ENCODE measurements at regions of chr6 and their contacts with region 1.

Region 1: GRCh38 chr6:37155394-37156312 is 14.3 kb upstream of the PIM1 start:
- DNase-seq: peak; percentile 66
- ATAC-seq: peak; percentile 85
- H3K4me3 Mint-ChIP-seq: peak overlapping the region; percentile 59
- H3K27ac Mint-ChIP-seq: peak overlapping the region; percentile 97
- H3K4me1 Mint-ChIP-seq: peaks cover 65% of the 10 kb centered on the region
- H3K27me3 Mint-ChIP-seq: no peaks in the 10 kb centered on the region
- CTCF ChIP-seq: no peak

Region 2: GRCh38 chr6:36858407-36858981 is 297.2 kb before region 1 on chr6:
- CTCF ChIA-PET with region 1: no interaction called
- POLR2A ChIA-PET with region 1: no interaction called
- intact Hi-C with region 1: no loop called
- DNase-seq: no peak
- ATAC-seq: no peak
- H3K4me3 Mint-ChIP-seq: no peak overlapping the region
- H3K27ac Mint-ChIP-seq: no peak overlapping the region
- H3K4me1 Mint-ChIP-seq: no peaks in the 10 kb centered on the region
- H3K27me3 Mint-ChIP-seq: no peaks in the 10 kb centered on the region
- CTCF ChIP-seq: no peak

Region 3: GRCh38 chr6:37131104-37131959 is 24.3 kb before region 1 on chr6:
- CTCF ChIA-PET with region 1: no interaction called
- POLR2A ChIA-PET with region 1: interaction called, 10 read pairs
- intact Hi-C with region 1: no loop called
- DNase-seq: no peak
- ATAC-seq: no peak
- H3K4me3 Mint-ChIP-seq: no peak overlapping the region
- H3K27ac Mint-ChIP-seq: no peak overlapping the region
- H3K4me1 Mint-ChIP-seq: peaks cover 12% of the 10 kb centered on the region
- H3K27me3 Mint-ChIP-seq: no peaks in the 10 kb centered on the region
- CTCF ChIP-seq: no peak